ENCODE measurements at regions of chr11 and their contacts with region 1.

Region 1: GRCh38 chr11:36265793-36266628 is 23.2 kb downstream of the COMMD9 start:
- DNase-seq: peak; percentile 44
- H3K4me3 ChIP-seq: no peak overlapping the region
- H3K27ac ChIP-seq: no peak overlapping the region
- H3K4me1 ChIP-seq: no peaks in the 10 kb centered on the region
- CTCF ChIP-seq: peak; percentile 92

Region 2: DNA sequence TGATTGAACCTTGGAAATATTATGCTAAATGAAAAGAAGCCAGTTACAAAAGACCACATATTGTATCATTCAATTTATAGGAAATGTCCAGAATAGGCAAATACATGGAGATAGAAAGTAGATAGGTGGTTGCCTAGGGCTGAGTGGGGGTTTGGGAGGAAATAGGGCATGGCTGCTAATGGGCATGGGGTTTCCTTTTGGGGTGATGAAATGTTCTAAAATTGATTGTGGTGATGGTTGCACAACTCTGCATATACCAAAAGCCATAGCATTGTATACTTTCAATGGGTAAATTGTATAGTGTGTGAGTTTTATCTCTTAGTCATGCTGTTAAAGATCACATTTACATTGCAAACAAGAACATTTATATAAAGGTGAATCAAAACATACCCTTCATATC is 273.5 kb before region 1 on chr11:
- CTCF ChIA-PET with region 1: no interaction called
- POLR2A ChIA-PET with region 1: no interaction called
- intact Hi-C with region 1: no loop called
- DNase-seq: no peak
- H3K4me3 ChIP-seq: no peak overlapping the region
- H3K27ac ChIP-seq: no peak overlapping the region
- H3K4me1 ChIP-seq: no peaks in the 10 kb centered on the region
- CTCF ChIP-seq: no peak

Region 3: DNA sequence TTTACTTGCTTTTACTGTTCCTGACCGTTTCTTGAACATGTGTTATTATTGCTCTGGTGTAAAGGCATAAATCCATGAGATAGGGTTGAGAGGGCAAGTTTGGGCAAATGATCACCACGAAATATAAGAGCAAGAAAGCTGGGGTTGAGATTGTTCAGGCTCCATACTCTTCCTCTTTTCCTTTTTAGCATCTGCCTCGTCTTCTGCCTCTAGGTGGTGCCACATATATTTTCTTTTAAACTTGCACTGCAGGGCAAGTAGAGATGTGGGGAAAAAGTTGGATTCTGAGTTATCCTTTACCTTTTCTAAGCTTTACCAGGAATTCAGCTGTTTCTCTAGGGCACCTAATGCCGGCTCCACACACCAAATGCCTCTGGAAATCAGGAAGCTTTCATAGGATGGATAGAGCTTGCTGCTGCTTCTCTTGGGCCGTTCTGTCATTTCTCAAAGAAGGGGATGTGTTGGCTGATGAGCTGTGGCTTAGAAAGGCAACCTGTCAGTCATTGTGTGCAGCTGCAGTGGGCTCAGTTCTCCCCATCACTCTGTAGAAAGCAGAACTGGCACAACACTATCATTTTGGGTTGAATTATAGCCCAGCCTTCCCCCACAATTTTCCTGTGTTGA is 223.9 kb before region 1 on chr11:
- CTCF ChIA-PET with region 1: no interaction called
- POLR2A ChIA-PET with region 1: no interaction called
- intact Hi-C with region 1: loop called (anchors 2 kb)
- DNase-seq: no peak
- H3K4me3 ChIP-seq: no peak overlapping the region
- H3K27ac ChIP-seq: no peak overlapping the region
- H3K4me1 ChIP-seq: no peaks in the 10 kb centered on the region
- CTCF ChIP-seq: peak; percentile 68